Posterior cingulate gyrus (tissue), 11 donors: ENCODE measurements at regions of chr6 and their contacts with region 1.

Region 1: DNA sequence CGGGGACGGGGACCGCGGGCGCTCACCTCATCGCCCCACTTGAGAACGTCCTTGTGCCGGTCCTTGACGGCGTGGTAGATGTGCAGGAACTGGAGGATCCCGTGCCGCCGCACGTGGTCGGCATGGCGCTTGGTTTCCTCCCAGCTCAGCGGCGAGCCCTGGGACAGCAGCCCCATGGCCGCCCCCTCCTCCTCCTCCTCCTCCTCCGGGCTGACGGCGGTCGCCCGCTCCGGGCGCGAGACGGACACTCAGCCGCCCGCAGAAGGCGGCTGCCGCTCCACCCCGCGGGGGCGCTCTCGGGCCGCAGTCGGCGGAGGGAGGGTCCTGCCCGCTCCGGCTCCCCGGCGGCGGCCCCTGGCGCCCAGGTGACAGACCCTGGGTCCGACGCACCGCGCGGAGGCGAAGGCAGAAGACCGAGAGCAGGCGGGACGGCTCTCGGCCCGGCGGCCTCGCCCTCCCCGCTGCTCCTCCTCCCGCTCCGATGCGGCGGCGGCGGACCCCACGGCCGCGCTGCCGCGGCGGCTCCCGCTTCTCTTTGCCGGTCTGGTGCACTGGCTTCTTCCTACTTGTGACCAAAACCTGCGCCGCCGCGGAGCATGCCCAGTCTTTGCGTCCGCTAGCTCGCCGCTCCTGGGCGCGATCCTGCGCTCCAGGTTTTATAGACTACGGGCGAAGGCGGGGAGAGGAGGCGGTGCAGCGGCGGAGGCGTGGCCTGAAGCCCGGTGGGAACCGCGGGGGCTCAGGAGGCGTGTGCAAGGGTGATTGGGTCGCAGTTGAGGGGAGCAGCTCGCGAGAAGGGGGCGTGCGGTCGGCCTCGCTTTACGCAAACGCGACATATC is at the start of gene GCLC:
- DNase-seq: peak; percentile 90 to 99 (median 92)

Region 2: DNA sequence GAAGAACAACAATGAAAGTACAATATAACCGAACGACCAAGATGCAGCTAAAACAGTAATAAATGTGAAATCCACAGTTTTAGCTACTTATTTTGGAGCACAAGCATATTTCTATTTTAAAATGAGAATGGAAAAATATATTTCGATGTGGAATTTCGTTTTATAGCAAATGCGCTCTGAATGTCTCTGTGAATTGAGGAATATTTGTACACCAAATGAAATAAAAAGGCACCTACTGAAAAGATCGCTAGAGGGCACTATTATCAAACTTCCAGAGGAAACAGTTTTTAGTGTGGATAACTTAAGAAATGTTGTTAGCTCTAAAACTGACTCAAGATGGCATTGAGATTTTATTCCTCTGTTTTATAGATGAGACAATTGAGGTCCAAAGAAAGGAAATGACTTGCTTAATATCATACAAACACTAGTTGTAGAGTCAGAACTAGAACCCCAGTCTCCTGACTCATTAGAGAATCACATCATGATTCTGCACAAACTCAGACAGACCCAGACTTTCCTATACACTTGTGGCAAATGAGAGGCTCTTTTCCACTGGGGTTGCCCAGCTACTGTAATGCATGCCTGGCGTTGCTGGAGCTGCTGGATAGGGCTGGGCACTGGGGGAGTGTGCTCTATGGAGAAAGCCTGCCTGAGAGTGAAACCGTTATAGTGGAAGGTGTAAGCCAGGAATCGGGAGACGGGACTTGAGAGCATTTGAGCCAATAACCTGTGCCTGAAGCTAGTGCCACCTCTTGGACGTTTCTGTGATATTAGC is 51.6 kb before region 1 on chr6:
- intact Hi-C with region 1: loop called (anchors 5 kb)
- DNase-seq: no peak

Region 3: GRCh38 chr6:53615633-53616449 is 71.2 kb after region 1 on chr6:
- intact Hi-C with region 1: no loop called
- DNase-seq: no peak

Region 4: DNA sequence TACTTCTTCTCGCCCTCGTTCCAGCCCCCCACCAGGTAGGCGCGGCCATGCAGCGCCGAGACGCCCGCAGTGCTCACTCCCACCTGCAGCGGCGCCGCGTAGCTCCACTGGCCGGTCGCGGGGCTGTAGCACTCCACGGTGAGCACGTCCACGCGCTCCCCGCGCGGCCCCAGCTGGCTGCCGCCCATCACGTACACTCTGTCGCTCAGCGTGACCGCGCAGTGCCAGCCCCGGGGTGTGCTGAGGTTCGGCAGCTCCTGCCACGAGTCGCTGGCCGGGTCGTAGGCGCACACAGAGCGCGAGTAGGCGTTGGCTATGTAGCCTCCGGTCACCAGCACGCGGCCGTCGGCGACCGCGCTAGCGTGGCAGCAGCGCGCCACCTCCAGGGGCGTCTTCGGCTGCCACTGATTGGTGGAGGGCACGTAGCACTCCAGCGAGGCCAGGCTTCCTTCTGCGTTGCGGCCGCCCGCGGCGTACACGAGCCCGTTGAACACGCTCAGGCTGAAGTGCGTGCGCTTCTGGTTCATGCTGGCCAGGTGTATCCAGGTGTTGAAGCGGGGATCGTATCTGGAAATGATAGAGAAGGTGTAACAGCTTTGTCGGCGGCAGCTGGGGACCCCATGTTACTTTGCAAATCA is 107.2 kb after region 1 on chr6:
- intact Hi-C with region 1: loop called (anchors 2 kb)
- DNase-seq: peak; percentile 49 to 96 (median 73)

Region 5: DNA sequence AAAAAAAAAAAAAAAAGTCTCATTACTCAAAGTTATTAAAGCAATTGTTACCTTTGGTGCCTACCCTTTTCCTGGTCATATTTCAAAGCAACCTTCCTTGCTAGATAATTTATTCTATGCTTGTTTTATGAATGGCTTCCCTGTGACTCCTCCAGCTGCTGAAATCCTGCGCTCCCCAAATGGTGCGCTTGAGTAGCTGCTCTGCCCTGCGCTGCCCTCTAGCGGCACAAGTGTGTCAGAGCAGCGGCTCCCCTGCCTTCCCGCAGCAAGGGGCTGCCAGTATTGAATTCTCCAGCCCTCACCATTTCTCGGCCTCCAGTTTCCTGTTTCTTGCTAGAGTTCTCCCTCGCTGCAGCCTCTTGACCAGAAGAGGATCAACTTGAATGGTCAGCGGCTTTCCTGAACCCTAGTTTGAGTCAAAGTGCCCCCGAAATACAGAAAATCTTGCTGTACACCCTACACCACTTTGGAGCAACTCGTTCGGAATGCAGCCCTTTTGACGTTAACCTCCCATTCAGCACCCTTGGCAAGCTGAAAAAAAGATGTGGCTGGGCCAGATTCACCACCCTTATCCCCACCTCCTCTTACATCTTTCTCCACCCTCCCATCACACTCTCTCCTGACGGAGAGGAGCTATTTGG is 181.2 kb after region 1 on chr6:
- intact Hi-C with region 1: loop called (anchors 5 kb)
- DNase-seq: peak; percentile 67 to 97 (median 84)

Region 6: DNA sequence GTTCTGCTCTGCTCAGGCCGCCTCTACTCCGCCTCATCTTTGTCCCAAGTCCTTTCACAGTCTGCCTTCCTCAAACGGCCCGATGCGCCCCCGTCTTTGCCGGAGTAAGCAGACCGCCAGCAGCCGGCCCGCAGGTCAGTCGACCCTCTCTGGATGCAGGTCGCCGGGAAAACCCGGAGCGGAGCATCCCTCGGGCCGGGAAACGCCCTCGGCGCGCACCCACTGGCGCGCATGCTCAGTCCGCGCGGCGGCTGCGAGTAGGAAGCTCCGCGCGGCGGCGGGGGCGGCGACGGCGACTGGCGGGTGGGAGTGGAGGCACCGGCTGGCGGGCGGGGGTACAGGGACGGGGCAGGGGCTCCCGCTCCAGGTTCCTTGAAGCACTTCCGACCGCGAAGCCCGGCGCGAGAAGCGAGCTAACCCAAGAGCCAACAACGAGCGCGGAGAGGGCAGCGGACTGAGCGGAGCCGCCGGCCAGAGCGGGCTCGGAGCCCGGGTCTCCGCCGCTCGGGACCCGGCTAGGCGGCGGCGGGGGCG is 250.1 kb after region 1 on chr6 and contains the start of gene LRRC1:
- intact Hi-C with region 1: loop called (anchors 5 kb)
- DNase-seq: peak; percentile 83 to 98 (median 90)